ENCODE measurements at regions of chr5 and their contacts with region 1.

Region 1: DNA sequence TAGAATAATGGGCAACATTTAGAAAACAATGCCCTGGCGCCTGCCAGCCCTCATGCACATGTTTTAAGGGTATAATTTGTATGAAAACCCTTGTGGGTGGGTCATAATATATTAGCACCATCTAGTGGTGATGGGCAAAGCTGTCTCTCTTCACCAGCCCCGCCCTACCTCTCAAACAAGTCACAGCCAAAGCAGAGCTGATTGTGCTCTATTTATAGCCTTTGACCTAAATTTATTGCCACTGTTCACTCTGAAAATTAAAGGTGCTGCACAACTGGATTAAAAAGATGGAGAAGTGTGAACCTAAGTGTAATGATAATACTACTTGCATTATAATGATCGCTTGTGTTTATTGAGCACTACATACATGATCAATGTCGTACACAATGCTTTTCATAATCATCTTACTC is 131.9 kb upstream of the ANKH start:
- DNase-seq: peak; percentile 71
- ATAC-seq: peak; percentile 95
- H3K4me3 Mint-ChIP-seq: no peak overlapping the region
- H3K27ac Mint-ChIP-seq: no peak overlapping the region
- H3K4me1 Mint-ChIP-seq: peaks cover 16% of the 10 kb centered on the region
- H3K27me3 Mint-ChIP-seq: peaks cover 37% of the 10 kb centered on the region

Region 2: GRCh38 chr5:14351845-14352712 is 651.4 kb before region 1 on chr5:
- CTCF ChIA-PET with region 1: interaction called, 12 read pairs
- POLR2A ChIA-PET with region 1: no interaction called
- DNase-seq: peak; percentile 74
- ATAC-seq: peak; percentile 97
- H3K4me3 Mint-ChIP-seq: no peak overlapping the region
- H3K27ac Mint-ChIP-seq: no peak overlapping the region
- H3K4me1 Mint-ChIP-seq: peaks cover 10% of the 10 kb centered on the region
- H3K27me3 Mint-ChIP-seq: peaks cover 8% of the 10 kb centered on the region

Region 3: DNA sequence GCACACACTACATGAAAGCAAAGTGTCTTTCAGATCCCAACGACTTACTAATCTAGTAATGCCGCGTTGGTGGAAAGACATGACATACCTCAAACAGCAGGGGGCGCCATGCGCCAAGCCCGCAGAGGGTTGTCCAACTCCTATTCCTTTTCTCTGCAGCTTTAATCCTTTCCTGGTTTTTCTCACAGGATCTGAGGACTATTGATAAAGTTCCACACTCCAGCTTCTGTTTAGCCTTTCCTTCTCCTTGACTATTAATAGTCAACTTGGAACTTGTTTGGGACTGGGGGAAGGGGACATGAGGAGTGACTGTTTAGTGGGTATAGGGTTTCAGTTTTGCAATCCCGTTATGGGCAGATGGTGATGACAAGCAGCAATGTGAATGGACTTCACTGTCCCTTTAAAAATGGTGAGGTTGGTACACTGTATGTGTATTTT is 276.1 kb before region 1 on chr5:
- CTCF ChIA-PET with region 1: interaction called, 72 read pairs
- POLR2A ChIA-PET with region 1: no interaction called
- DNase-seq: peak; percentile 83
- ATAC-seq: peak; percentile 77
- H3K4me3 Mint-ChIP-seq: no peak overlapping the region
- H3K27ac Mint-ChIP-seq: no peak overlapping the region
- H3K4me1 Mint-ChIP-seq: peaks cover 2% of the 10 kb centered on the region
- H3K27me3 Mint-ChIP-seq: no peaks in the 10 kb centered on the region

Region 4: DNA sequence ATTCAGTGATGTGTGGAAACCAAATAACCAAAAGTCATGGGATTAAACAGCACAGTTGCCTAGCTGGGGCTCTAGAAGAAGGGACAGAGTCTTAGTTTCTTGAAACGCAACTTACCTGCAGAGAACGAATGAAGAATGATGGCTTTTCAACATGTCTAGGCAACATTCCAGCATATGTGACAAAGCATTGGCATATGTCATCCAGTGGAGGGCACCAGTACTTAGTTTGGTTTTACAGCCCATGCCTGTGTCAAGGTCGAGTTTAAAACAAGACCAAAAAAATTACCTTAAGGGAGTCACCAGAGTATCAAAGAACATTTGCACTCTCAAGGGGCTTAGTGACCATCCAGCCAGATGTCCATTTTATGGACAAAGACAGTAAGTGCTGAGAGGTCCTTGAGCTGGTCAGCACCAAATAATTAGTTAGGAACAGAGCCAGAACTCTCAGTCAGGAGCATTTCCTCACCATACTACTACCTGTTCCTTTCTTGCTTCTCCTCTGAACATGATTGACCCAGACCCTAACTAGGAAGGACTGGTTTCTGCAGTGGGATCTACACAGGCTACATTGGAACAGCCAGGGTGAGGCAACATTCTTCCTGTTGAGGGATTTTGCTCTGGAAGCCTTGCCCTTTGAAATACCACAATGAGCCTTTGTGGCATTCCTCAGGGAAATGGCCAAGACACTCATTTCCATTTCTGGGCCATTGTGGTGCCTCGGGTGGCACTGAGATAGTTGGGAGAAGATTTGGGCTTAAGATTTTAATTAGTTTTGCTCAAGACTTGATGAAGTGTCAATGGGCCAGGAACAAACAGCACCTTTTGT is 56.5 kb before region 1 on chr5:
- CTCF ChIA-PET with region 1: interaction called, 11 read pairs
- POLR2A ChIA-PET with region 1: no interaction called
- DNase-seq: peak; percentile 45
- ATAC-seq: peak; percentile 72
- H3K4me3 Mint-ChIP-seq: no peak overlapping the region
- H3K27ac Mint-ChIP-seq: no peak overlapping the region
- H3K4me1 Mint-ChIP-seq: peaks cover 8% of the 10 kb centered on the region
- H3K27me3 Mint-ChIP-seq: peaks cover 10% of the 10 kb centered on the region

Region 5: DNA sequence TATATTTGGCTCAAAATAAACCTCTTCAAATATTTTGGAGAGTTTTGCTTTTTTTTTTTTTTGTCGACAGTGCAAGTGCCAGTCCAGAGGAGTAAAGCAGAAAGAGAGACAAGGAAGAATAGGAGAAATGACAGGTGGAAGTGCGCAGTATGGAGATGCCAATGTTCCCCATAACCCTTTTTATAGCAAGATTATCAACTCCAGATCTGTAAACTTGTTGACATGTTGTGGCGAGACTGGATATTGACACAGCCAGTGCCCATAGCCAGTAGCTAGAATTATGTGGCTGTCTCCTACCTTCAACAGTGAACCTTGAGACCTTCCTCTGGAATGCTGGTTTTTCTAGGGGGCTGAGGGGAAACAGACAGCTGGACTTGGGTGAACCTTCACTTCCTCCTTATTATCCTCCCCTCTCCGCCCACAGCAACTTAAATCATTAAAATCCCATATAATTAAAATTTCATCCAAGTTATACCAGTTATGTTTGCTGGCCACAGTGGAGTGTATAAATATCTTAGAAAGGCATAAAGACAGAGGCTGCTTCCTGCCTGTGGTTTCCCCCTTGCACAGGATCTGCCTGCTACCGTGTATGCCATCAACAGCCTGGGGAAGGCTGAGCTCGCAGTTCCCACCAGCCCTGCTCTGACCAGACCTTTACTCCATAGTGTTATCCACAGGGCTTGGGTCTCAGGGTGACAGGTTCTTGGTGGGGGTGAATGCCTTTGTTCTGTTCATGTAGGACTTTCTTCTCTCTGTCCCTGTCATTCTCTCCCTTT is 19.7 kb before region 1 on chr5:
- CTCF ChIA-PET with region 1: interaction called, 20 read pairs
- POLR2A ChIA-PET with region 1: no interaction called
- DNase-seq: peak; percentile 59
- ATAC-seq: peak; percentile 90
- H3K4me3 Mint-ChIP-seq: no peak overlapping the region
- H3K27ac Mint-ChIP-seq: no peak overlapping the region
- H3K4me1 Mint-ChIP-seq: peaks cover 24% of the 10 kb centered on the region
- H3K27me3 Mint-ChIP-seq: no peaks in the 10 kb centered on the region

Measured in activated CD8-positive, alpha-beta T cell treated with anti-CD3 and anti-CD28 coated beads, Interleukin-2, amount 10 ng/mL, durations not matched to agents 7 days and 5 days (primary cell).